Colonic mucosa (tissue), 4 donors: ENCODE measurements at regions of chr2 and their contacts with region 1.

Region 1: DNA sequence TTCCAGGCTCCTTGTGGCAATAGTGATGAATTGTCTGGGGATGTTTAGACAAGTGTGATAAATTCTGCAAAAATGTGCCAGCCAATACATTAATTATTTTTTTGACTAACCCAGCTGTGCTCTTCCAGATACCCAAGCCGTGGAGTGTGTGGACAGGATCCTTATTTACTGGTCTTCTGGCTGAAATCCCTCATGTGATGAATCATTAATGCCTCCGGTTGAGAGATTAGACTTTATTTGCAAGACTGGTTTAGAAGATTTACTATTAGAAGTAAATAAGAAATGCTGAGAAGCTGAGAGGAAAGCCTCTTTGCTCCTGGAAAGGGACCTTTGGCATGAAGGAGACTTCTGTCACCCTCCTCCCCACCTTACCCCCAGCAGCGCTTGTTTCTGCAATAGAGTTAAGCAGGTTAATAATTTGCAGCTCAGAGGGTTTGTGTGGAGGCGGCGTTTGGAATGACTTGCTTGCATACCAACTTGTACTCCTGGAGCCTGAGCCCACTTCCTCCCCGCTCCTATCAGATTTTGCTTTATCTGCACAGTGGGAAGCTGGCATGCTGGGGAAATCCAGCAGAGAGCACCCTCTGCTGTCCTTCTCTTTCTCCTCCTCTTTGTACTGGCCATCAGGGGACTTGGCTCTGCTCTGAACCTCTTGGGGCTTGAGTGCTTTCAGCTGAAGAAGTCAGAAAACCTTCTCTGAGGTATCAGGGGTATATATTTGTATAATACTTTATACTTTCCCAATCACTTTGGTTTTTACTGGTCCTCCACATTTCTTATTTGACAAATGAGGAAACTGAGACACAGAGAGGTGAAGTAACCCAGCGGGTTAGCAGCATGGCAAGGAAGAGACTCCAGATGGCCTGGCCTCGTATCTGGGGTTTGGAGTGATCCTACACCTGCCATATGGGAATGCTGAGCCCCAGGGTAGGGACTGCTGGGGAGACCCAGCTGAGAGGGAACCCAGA is 16.3 kb downstream of the SLC3A1 start:
- DNase-seq: peak; percentile 76
- H3K4me3 ChIP-seq: no peak overlapping the region
- H3K27ac ChIP-seq: peak overlapping the region; percentile 56
- H3K4me1 ChIP-seq: peaks cover 10% of the 10 kb centered on the region
- H3K27me3 ChIP-seq: no peaks in the 10 kb centered on the region
- CTCF ChIP-seq: peak; percentile 52

Region 2: DNA sequence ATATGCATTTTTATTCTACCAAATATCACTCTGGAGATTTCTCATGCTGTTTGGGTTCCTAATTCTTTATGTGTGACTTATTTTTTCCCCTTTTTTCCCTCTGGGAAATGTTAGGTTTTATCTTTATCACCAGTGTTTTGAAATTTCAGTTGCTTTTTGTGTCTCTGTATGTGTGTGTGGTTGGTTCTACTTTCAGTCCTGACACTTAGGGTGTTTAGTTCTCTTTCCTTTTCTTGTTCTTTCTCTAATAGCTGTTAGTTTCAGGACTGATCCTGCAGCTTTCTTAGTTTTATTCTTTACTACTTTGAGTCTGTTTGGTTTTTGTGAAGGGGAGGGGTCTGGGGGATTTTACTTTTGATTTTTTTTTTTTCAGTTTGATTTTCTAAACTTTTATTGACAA is 99.8 kb before region 1 on chr2:
- intact Hi-C with region 1: no loop called
- DNase-seq: no peak
- H3K4me3 ChIP-seq: no peak overlapping the region
- H3K27ac ChIP-seq: no peak overlapping the region
- H3K4me1 ChIP-seq: no peaks in the 10 kb centered on the region
- H3K27me3 ChIP-seq: no peaks in the 10 kb centered on the region
- CTCF ChIP-seq: no peak

Region 3: DNA sequence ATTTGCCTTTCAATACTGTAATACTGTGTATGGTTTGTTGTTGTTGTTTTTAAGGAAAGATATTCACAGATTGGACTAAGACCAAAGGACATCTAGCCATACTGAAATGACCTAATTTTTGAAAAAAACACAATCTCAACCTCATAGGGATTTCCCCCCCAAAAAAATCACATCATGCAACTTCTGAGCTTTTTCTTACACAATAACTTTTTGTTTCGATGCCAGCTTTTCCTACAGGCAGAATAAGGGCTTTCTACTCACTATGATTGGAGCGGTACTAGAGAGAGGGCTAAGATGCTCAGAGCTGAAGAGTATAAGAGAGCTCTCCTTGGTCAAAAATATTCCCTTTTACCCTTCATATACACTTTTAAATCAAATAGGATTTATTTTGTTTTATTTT is 48.7 kb before region 1 on chr2:
- intact Hi-C with region 1: loop called (anchors 2 kb)
- DNase-seq: no peak
- H3K4me3 ChIP-seq: no peak overlapping the region
- H3K27ac ChIP-seq: no peak overlapping the region
- H3K4me1 ChIP-seq: no peaks in the 10 kb centered on the region
- H3K27me3 ChIP-seq: no peaks in the 10 kb centered on the region
- CTCF ChIP-seq: no peak